Activated T-helper 2 cell treated with anti-CD3 and anti-CD28 coated beads, Interferon-gamma antibody, Interleukin-2, Interleukin-4, amounts not matched to agents 10 μg/mL and 5 μg/mL and 100 μg/mL, durations not matched to agents 14 hours and 24 hours and 36 hours (primary cell): ENCODE measurements at regions of chr6 and their contacts with region 1.

Region 1: GRCh38 chr6:165662749-165663282 is at the start of gene PDE10A:
- DNase-seq: no peak
- H3K4me3 Mint-ChIP-seq: no peak within 1 kb of the TSS
- H3K27ac Mint-ChIP-seq: no peak within 1 kb of the TSS
- H3K4me1 Mint-ChIP-seq: peaks cover 5% of the 10 kb centered on the region
- H3K27me3 Mint-ChIP-seq: peaks cover 59% of the 10 kb centered on the region
- total RNA-seq, gene PDE10A: 0.05 TPM in 1 of 2 replicates, not detected in the other

Region 2: GRCh38 chr6:165850434-165851019 is 187.7 kb after region 1 on chr6:
- intact Hi-C with region 1: loop called (anchors 5 kb)
- DNase-seq: peak; percentile 37
- H3K4me3 Mint-ChIP-seq: no peak overlapping the region
- H3K27ac Mint-ChIP-seq: no peak overlapping the region
- H3K4me1 Mint-ChIP-seq: peaks cover 18% of the 10 kb centered on the region
- H3K27me3 Mint-ChIP-seq: peaks cover 38% of the 10 kb centered on the region

Region 3: DNA sequence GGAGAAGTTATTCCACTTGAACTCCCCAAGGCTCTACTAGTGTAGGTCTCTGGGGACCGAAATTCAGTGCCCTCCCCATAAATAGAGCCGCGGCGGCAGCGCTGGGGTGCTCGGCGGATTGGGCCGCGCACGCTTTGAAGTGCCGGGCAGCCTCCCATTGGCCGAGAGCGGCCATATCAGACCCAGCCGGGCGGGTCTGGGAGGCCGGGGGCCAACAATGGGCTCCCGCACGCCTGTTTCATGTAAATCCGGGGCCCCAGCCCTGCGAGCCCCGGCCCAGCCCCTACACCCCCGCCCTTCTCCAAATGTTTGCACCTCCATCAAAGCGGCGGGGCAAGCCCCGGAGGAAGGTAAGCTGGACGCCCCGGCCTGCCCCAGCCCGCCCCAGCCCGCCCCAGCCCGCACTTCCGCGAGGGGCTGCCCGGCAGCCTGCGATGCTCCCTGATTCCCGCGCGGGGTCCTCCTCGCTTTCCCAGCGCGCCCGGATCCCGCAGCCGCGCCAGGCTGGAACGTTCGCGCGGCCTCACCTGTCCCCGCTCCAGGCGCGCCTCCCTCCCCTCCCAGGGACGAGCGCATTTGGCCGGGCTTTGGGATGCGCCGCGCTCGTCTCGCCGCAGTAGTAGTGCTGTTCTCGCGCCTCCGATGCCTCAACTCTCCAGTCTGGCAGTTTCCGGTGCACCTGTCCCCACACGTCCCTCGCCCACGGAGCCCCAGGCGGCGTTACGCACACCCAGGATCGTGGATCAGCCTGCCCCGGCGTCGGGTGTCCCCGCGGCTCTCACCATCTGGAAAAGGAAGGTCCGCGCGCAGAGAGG is 505.2 kb after region 1 on chr6 and contains the start of gene TBXT:
- intact Hi-C with region 1: loop called (anchors 5 kb)
- DNase-seq: no peak
- H3K4me3 Mint-ChIP-seq: peak within 1 kb of the TSS; percentile 38
- H3K27ac Mint-ChIP-seq: no peak within 1 kb of the TSS
- H3K4me1 Mint-ChIP-seq: peaks cover 5% of the 10 kb centered on the region
- H3K27me3 Mint-ChIP-seq: peaks cover 59% of the 10 kb centered on the region
- total RNA-seq, gene TBXT: not detected in 2 replicates